ENCODE measurements at regions of chr2 and their contacts with region 1.

Region 1: DNA sequence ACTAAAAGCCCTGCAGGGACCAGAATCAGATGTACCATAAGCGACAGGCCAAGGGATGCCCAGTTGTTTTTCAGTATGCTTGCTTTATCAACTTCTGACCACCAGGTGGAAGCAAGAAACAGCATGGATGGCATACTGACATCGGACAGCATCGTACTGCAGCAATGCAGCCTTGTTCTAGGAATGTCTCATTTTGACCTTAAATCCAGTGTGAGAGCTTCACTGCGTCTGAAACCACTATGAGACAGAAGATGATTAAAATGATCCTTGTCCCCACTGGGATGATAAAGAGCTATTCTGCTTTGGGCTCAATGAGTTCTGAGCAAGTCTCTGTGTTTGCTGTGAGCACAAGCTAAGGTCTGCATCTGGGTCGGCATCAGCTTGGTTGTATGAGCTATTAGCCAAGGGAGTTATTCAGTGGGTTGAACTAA is 54.3 kb downstream of the CDK15 start:
- DNase-seq: peak; percentile 45
- H3K4me3 Mint-ChIP-seq: no peak overlapping the region
- H3K27ac Mint-ChIP-seq: no peak overlapping the region
- H3K4me1 Mint-ChIP-seq: peaks cover 15% of the 10 kb centered on the region
- H3K27me3 Mint-ChIP-seq: peaks cover 18% of the 10 kb centered on the region

Region 2: DNA sequence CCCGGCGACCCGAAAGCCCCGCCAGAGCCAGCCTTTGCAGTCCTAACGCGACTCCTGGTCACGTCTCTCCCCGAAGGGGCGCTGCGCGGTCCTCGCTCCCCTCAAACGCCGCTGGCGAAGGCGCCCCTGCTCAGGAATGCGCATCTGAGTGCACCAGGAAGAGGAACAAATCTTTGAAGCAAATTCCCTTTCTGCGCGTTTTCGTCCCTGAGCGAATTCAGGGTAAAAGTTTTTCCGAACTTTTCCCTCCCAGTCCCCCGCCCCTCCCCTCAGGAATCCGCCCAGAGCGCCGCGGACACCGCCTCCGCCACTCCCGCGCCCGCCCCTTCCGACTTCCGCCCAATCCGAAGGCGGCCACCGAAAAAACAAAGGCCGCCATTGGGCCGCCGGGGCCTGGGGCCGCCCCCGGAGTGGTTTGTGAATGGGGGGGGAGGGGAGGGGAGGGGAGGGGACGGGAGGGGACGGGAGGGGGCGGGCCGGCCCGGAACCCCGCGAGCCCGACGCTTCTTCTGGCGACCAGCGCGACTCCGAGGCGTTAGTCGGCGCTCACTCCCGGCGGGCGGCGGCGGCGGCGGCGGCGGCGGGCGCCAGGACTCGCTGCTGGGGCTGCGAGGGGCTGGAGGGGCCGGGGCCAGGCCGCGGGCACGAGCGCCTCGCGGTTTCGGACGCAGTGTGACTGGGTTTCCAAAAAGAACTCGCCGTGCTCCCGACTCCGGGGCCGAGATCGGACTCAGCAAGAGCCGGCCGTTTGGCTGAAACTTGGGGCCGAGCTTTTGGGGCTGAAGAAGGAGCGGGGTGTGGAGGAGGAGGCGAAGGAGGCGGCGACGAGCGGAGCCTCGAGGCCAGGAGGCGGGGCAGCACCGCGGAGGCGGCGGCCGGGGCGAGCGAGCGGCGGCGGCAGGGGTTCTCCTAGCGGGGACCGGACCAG is 172.9 kb after region 1 on chr2 and contains the start of gene FZD7:
- CTCF ChIA-PET with region 1: interaction called, 6 read pairs
- POLR2A ChIA-PET with region 1: no interaction called
- intact Hi-C with region 1: loop called (anchors 2 kb)
- DNase-seq: peak; percentile 91
- H3K4me3 Mint-ChIP-seq: peak within 1 kb of the TSS; percentile 80
- H3K27ac Mint-ChIP-seq: no peak within 1 kb of the TSS
- H3K4me1 Mint-ChIP-seq: peaks cover 11% of the 10 kb centered on the region
- H3K27me3 Mint-ChIP-seq: peaks cover 19% of the 10 kb centered on the region
- total RNA-seq, gene FZD7: 0.58 to 0.62 TPM

Region 3: DNA sequence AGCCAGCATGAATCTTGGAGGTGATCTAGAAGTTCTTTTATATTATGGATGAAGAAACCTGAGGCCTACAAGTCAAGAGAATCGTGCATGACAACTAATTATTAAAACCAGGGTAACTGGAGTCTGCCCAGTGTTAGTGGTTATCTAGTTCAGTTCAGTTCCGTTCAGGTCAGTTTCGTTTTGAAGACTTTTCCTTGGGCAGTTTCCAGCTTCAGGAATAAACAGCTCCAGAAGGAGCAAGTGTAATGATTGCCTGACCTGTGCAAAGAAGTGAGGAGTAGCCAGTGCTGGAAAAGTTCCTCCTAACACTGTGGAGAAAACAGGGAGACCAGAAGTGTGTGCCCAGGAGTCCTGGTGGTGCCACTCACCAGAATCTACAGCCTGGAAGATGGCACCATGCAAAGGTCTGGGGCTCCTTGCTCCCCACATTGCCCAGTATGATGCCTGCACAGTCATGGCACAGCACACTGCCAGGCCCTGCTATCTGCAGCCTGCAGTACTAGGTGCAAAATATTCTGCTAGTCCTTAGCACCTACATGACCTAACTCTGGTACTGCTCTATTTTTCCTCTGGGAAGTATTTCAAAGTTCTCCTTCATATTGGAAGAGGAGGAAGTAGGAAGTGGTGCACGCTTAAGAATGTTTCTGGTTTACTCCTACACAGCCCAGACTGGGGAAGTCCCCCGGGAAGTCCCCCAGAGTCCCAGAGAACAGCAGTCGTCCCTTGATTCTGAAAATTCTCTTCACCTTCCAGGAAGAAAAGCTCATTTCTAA is 312.0 kb after region 1 on chr2:
- CTCF ChIA-PET with region 1: interaction called, 113 read pairs
- POLR2A ChIA-PET with region 1: no interaction called
- intact Hi-C with region 1: no loop called
- DNase-seq: peak; percentile 63
- H3K4me3 Mint-ChIP-seq: no peak overlapping the region
- H3K27ac Mint-ChIP-seq: peak overlapping the region; percentile 1
- H3K4me1 Mint-ChIP-seq: peaks cover 12% of the 10 kb centered on the region
- H3K27me3 Mint-ChIP-seq: peaks cover 3% of the 10 kb centered on the region